A549 (cell line): ENCODE measurements at regions of chr1 and their contacts with region 1.

Region 1: GRCh38 chr1:150578965-150579798 is at the start of gene MCL1:
- DNase-seq: peak; percentile 84 to 96
- ATAC-seq: peak; percentile 90 to 94
- H3K4me3 ChIP-seq: peak within 1 kb of the TSS; percentile 91
- H3K27ac ChIP-seq: peak within 1 kb of the TSS; percentile 98
- H3K4me1 ChIP-seq: peaks cover 31% of the 10 kb centered on the region
- CTCF ChIP-seq: no peak
- EP300 ChIP-seq: peak in 1 of 2 experiments; percentile 9; a peak in 1 of 5 replicates
- POLR2A ChIP-seq: peak; percentile 87
- RAD21 ChIP-seq: no peak; a peak in 1 of 5 replicates
- polyA plus RNA-seq, gene MCL1: 145 and 202 TPM in 2 replicates

Region 2: GRCh38 chr1:150567717-150568593 is 11.2 kb before region 1 on chr1:
- CTCF ChIA-PET with region 1: interaction called, 140 read pairs
- POLR2A ChIA-PET with region 1: interaction called, 201 read pairs
- DNase-seq: peak; percentile 43 to 77
- ATAC-seq: peak; percentile 30 to 49
- H3K4me3 ChIP-seq: no peak overlapping the region
- H3K27ac ChIP-seq: peak overlapping the region; percentile 79 to 99
- H3K4me1 ChIP-seq: peaks cover 87% of the 10 kb centered on the region
- CTCF ChIP-seq: no peak
- EP300 ChIP-seq: no peak
- POLR2A ChIP-seq: no peak
- RAD21 ChIP-seq: no peak

Region 3: GRCh38 chr1:150606463-150607148 is 27.4 kb after region 1 on chr1:
- CTCF ChIA-PET with region 1: interaction called, 6 read pairs
- POLR2A ChIA-PET with region 1: interaction called, 49 read pairs
- DNase-seq: no peak
- ATAC-seq: no peak
- H3K4me3 ChIP-seq: no peak overlapping the region
- H3K27ac ChIP-seq: peak overlapping the region; percentile 89
- H3K4me1 ChIP-seq: peaks cover 49% of the 10 kb centered on the region
- CTCF ChIP-seq: no peak
- EP300 ChIP-seq: no peak
- POLR2A ChIP-seq: no peak
- RAD21 ChIP-seq: no peak

Region 4: GRCh38 chr1:150621497-150622302 is 42.5 kb after region 1 on chr1:
- CTCF ChIA-PET with region 1: interaction called, 13 read pairs
- POLR2A ChIA-PET with region 1: interaction called, 43 read pairs
- DNase-seq: peak; percentile 62 to 64
- ATAC-seq: peak in 1 of 2 experiments; percentile 35; a peak in 2 of 6 replicates
- H3K4me3 ChIP-seq: no peak overlapping the region
- H3K27ac ChIP-seq: peak overlapping the region in 1 of 2 experiments; percentile 50; a peak in 5 of 6 replicates
- H3K4me1 ChIP-seq: peaks cover 16% of the 10 kb centered on the region
- CTCF ChIP-seq: peak; percentile 66
- EP300 ChIP-seq: no peak
- POLR2A ChIP-seq: no peak
- RAD21 ChIP-seq: peak; percentile 60 to 61

Region 5: GRCh38 chr1:150661156-150661555 is 82.0 kb after region 1 on chr1:
- CTCF ChIA-PET with region 1: no interaction called
- POLR2A ChIA-PET with region 1: no interaction called
- DNase-seq: no peak
- ATAC-seq: no peak
- H3K4me3 ChIP-seq: no peak overlapping the region
- H3K27ac ChIP-seq: no peak overlapping the region
- H3K4me1 ChIP-seq: 0 out of 3 replicates have a peak, but pooled peaks cover 4% of the 10 kb centered on the region
- CTCF ChIP-seq: no peak
- EP300 ChIP-seq: no peak
- POLR2A ChIP-seq: no peak
- RAD21 ChIP-seq: no peak

Region 6: DNA sequence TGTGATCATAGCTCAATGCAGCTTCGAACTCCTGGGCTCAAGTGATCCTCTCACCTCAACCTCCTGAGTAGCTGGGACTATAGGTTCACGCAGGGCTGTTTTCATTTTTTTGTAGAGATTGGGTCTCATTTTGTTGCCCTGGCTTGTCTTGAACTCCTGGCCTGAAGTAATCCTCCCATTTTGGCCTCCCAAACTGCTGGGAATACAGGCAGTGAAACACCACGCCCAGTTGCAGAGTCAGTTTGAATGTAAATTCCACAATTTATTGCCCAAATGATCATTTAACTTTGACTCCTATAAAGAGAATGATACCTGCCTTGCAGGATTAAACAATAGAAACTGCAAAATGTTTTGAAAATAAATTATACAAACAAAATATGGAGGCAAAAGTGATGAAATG is 107.1 kb after region 1 on chr1:
- CTCF ChIA-PET with region 1: no interaction called
- POLR2A ChIA-PET with region 1: interaction called, 10 read pairs
- DNase-seq: no peak
- ATAC-seq: no peak
- H3K4me3 ChIP-seq: no peak overlapping the region
- H3K27ac ChIP-seq: no peak overlapping the region
- H3K4me1 ChIP-seq: no peaks in the 10 kb centered on the region
- CTCF ChIP-seq: no peak
- EP300 ChIP-seq: no peak
- POLR2A ChIP-seq: no peak
- RAD21 ChIP-seq: no peak

Region 7: GRCh38 chr1:150836129-150836773 is 257.1 kb after region 1 on chr1:
- CTCF ChIA-PET with region 1: no interaction called
- POLR2A ChIA-PET with region 1: no interaction called
- DNase-seq: no peak
- ATAC-seq: no peak
- H3K4me3 ChIP-seq: no peak overlapping the region
- H3K27ac ChIP-seq: no peak overlapping the region
- H3K4me1 ChIP-seq: no peaks in the 10 kb centered on the region
- CTCF ChIP-seq: no peak
- EP300 ChIP-seq: no peak
- POLR2A ChIP-seq: no peak
- RAD21 ChIP-seq: no peak